Activated CD4-positive, alpha-beta T cell treated with anti-CD3 and anti-CD28 coated beads, Interleukin-2, amount 10 ng/mL, durations not matched to agents 24 days and 14 days (primary cell): ENCODE measurements at regions of chr14 and their contacts with region 1.

Region 1: GRCh38 chr14:71320107-71320733 is 413.0 kb downstream of the PCNX1 start:
- DNase-seq: peak; percentile 100
- H3K4me3 Mint-ChIP-seq: peak within 1 kb of the TSS; percentile 96
- H3K27ac Mint-ChIP-seq: peak within 1 kb of the TSS; percentile 99
- H3K4me1 Mint-ChIP-seq: peaks cover 40% of the 10 kb centered on the region
- H3K27me3 Mint-ChIP-seq: no peaks in the 10 kb centered on the region

Region 2: DNA sequence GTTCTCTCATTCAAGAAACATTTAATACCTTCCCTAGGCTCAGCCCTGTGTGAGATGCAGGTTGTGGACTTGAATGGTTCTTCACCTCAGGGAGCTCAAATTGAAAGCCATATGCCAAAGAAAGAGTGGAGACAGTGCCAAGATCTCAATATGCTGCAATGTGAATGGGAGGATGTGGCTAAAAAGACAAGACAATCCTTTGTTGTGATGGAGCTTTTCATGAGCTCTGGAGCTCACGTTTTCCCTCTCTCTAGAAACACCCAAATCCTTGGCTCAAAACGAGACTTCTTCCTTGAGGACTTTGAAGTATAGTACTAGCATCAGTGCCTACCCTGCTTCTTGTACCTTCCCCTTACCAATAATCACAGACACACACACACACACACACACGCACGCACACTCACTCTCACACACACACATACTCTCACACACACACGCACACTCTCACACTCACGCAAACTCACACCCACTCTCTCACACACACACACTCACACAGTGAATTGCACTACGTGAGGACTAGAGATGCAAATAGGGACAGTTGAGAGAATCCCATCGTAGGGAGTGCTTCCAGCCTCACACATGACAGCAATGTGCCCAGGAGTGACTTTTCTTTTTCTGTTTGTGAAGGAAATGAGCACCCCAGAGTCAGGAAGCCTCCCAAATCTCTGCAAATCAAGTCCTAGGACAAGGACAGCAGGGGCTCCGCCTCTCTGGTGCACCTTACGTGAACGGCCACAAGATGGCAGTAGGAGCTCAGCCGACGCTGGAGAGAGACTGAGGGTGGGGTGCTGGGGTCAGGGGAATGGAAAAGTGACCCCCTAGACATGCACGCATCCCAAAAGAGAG is 181.5 kb before region 1 on chr14:
- intact Hi-C with region 1: loop called (anchors 1 kb)
- DNase-seq: peak; percentile 89
- H3K4me3 Mint-ChIP-seq: no peak overlapping the region
- H3K27ac Mint-ChIP-seq: no peak overlapping the region
- H3K4me1 Mint-ChIP-seq: peaks cover 39% of the 10 kb centered on the region
- H3K27me3 Mint-ChIP-seq: no peaks in the 10 kb centered on the region

Region 3: GRCh38 chr14:71235875-71236274 is 84.3 kb before region 1 on chr14:
- intact Hi-C with region 1: no loop called
- DNase-seq: no peak
- H3K4me3 Mint-ChIP-seq: no peak overlapping the region
- H3K27ac Mint-ChIP-seq: no peak overlapping the region
- H3K4me1 Mint-ChIP-seq: peaks cover 4% of the 10 kb centered on the region
- H3K27me3 Mint-ChIP-seq: peaks cover 4% of the 10 kb centered on the region

Region 4: DNA sequence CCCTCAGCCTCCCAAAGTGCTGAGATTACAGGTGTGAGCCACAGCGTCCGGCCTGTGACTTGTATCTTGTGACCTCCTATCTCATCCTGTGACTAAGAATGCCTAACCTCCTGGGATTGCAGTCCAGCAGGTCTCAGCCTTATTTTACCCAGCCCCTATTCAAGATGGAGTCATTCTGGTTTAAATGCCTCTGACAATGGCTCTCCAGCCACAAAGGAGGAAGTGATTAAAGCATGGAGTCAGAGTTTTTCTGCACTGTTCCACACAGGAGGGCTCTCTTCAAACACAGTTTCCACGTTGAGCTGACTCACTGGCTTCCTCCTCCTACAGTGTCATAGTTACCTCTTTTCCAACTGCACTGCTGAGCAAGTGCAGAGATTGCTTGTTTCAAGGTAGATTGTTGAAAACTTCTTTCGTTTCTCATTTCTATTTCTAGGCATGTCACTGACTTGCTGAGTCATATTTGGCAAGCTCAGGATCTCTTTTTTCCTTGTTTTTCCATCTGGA is 29.2 kb before region 1 on chr14:
- intact Hi-C with region 1: loop called (anchors 1 kb)
- DNase-seq: peak; percentile 73
- H3K4me3 Mint-ChIP-seq: no peak overlapping the region
- H3K27ac Mint-ChIP-seq: peak overlapping the region; percentile 87
- H3K4me1 Mint-ChIP-seq: peaks cover 18% of the 10 kb centered on the region
- H3K27me3 Mint-ChIP-seq: no peaks in the 10 kb centered on the region

Region 5: DNA sequence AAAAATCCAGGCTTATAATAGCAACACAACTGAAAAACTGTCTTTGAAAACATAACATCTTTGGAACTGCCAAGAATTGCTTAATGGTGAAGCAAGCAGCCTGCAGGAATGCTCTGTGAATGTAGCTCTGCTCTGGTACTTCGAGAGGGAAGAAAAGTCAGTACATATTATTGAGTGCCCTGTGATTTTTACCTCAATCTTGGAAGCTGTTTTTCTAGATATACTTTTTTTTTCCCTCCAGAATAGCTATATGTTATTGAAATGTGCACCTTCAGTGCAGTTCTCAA is 95.1 kb after region 1 on chr14:
- intact Hi-C with region 1: loop called (anchors 1 kb)
- DNase-seq: no peak
- H3K4me3 Mint-ChIP-seq: no peak overlapping the region
- H3K27ac Mint-ChIP-seq: no peak overlapping the region
- H3K4me1 Mint-ChIP-seq: peaks cover 25% of the 10 kb centered on the region
- H3K27me3 Mint-ChIP-seq: no peaks in the 10 kb centered on the region

Region 6: GRCh38 chr14:71555654-71556559 is 235.7 kb after region 1 on chr14:
- intact Hi-C with region 1: loop called (anchors 1 kb)
- DNase-seq: peak; percentile 91
- H3K4me3 Mint-ChIP-seq: peak overlapping the region; percentile 59
- H3K27ac Mint-ChIP-seq: peak overlapping the region; percentile 92
- H3K4me1 Mint-ChIP-seq: peaks cover 61% of the 10 kb centered on the region
- H3K27me3 Mint-ChIP-seq: no peaks in the 10 kb centered on the region

Region 7: GRCh38 chr14:71753126-71753830 is 433.1 kb after region 1 on chr14:
- intact Hi-C with region 1: loop called (anchors 1 kb)
- DNase-seq: peak; percentile 90
- H3K4me3 Mint-ChIP-seq: peak overlapping the region; percentile 35
- H3K27ac Mint-ChIP-seq: no peak overlapping the region
- H3K4me1 Mint-ChIP-seq: peaks cover 9% of the 10 kb centered on the region
- H3K27me3 Mint-ChIP-seq: peaks cover 2% of the 10 kb centered on the region